Posterior cingulate gyrus (tissue), 11 donors: ENCODE measurements at regions of chr16 and their contacts with region 1.

Region 1: DNA sequence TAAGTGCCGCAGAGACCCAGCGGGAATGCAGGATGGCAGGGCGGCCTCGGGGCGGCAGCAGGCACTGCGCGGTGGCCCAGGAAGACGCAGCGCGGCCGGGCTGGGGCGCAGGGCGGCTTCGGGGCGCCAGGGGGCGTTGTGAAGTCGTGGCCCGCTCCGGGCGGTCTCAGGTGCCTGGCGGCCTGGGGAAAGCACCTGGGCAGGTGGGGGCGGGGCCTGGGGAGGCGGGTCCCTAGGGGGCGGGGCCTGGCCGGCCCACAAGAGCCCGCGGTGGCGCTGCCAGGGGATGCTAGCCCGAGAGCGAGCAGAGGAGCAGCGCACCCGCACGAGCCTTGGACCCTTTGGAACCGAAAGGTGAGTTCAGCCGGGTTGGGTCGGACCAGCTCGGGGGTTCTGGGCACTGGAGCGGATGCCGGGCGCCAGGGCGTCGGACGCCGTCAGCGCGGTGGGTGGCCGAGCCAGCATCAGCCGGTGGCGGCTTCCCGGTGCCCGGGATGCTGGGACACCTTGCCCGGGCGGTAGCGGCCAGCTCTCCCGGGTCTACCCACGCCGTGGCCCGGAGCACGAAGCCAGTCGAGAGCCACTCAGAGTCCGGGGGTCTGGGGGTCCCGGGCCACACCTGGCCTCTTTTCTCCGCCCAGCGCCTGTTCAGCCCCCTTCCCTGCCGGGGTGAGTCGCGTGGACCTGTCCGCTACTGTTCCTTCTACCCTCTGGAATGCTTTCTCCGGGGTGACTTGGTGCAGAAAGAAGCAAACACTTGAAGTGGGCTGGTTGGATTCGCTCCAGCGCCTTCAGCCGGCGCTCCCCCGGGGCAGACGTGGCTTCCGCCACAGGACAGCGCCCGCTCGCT is at the start of gene SCNN1G:
- DNase-seq: peak; percentile 32 to 95 (median 68)

Region 2: DNA sequence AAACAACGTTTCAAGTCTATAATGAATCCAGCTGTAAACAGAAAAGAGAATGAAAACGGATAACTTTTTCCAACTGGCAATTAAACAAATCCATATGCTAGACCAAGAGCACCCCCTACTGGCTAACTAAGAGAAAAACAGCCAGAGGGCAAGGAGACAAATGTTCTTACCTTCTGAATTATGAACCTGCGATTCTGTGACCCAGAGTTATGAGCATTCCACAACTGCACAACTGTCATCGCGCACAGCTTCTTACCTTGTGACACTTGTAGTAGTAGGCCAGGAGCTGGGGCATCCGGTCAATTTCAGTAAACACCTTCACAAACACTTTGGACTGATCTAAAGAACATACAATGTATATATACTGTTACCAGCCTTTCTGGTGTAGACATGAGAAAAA is 251.7 kb after region 1 on chr16:
- intact Hi-C with region 1: loop called (anchors 1 kb)
- DNase-seq: no peak